Activated B cell treated with CpG ODN at 0.5 μM for 24 hours (primary cell): ENCODE measurements at regions of chr7 and their contacts with region 1.

Region 1: DNA sequence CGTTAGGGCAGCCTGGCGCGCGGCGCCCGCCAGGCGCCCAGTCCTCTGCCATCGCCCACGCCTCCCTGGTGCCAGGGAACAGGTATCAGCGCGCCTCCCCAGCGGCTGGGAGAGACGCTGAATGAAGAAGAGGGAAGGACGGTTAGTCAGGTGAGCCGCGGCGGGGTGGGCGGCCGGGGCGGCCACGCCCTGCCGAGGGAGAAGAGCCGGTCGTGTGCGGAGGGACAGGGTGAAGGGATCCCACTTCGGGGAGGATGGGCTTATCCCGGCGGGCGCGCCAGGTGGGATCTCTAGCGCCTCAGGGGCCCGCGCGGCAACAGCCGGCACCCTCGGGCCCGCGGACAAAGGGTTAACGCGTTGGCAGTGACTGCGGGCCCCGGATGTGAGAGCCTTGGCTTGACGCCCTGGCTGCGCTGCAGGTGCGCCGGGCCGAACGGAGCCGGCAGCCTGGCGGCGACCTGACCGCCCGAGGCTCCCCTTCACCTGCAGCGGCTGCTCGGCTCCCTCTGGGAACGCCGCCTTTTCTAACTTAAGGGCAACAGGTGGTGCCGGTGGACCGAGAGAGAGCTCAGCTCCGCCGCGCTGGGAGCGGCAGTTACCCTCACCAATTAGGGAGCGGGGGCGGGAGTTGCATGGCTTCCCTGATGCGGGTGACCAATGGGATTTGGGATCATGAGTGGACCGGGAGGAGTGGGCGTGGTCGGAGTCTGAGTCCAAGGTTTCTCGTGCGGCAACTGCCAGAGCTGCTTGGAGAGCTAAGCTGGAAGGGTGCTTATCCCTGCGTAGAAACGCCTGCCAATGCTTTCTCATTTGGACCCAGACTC is at the start of gene ARL4A:
- DNase-seq: peak; percentile 76
- ATAC-seq: peak; percentile 63
- H3K4me3 Mint-ChIP-seq: peak within 1 kb of the TSS; percentile 95
- H3K27ac Mint-ChIP-seq: peak within 1 kb of the TSS; percentile 96
- H3K4me1 Mint-ChIP-seq: peaks cover 47% of the 10 kb centered on the region
- H3K27me3 Mint-ChIP-seq: no peaks in the 10 kb centered on the region
- CTCF ChIP-seq: no peak
- total RNA-seq, gene ARL4A: 11.9 TPM in 2 replicates

Region 2: DNA sequence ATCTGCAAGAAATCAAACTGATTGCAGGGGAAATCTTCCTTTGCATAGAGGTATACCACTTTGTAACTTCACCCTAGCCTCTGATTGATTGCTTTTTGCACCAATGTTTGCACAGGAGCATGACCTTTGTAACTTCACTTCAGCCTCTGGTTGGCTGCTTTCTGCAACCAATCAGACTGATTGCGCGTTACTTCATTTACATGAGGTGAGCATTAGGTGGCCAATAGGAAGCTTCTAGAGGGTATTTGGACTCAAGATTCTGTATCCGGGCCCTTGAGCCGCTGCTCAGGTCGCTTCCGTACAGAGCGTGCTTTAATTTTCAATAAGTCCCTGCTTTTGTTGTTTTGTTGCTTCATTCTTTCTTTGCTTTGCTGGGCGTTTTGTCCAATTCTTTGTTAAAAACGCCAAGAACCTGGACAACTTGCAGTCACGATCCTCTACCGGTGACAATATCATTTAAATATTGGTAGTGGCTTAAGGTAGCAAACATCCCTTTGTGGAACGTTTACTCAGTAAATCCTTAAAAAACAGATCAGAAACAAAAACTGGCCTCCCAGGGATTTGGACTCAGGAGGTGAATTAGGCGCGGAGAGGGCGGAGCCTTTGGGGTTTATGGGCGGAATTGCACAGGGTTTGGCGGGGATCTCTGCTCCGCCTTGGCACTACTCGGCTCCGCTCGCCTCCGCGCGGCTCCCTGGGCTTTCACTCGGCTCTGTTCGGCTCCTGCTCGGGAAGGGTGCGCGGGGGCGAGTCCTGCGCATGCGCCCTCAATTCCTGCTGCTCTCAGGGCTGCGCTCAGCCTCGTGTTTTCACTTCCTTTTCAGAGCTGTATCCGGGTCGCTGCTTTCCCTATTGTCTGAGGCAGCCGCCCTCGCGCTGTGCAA is 1713.8 kb before region 1 on chr7 and contains the start of gene PHF14:
- CTCF ChIA-PET with region 1: no interaction called
- POLR2A ChIA-PET with region 1: no interaction called
- intact Hi-C with region 1: loop called (anchors 1 kb)
- DNase-seq: peak; percentile 87
- ATAC-seq: peak; percentile 95
- H3K4me3 Mint-ChIP-seq: peak within 1 kb of the TSS; percentile 93
- H3K27ac Mint-ChIP-seq: peak within 1 kb of the TSS; percentile 95
- H3K4me1 Mint-ChIP-seq: peaks cover 45% of the 10 kb centered on the region
- H3K27me3 Mint-ChIP-seq: peaks cover 3% of the 10 kb centered on the region
- CTCF ChIP-seq: no peak
- total RNA-seq, gene PHF14: 33.0 and 38.2 TPM in 2 replicates

Region 3: GRCh38 chr7:12257582-12257981 is 429.5 kb before region 1 on chr7:
- CTCF ChIA-PET with region 1: no interaction called
- POLR2A ChIA-PET with region 1: no interaction called
- intact Hi-C with region 1: loop called (anchors 2 kb)
- DNase-seq: no peak
- ATAC-seq: peak; percentile 96
- H3K4me3 Mint-ChIP-seq: no peak overlapping the region
- H3K27ac Mint-ChIP-seq: no peak overlapping the region
- H3K4me1 Mint-ChIP-seq: no peaks in the 10 kb centered on the region
- H3K27me3 Mint-ChIP-seq: no peaks in the 10 kb centered on the region
- CTCF ChIP-seq: no peak

Region 4: GRCh38 chr7:12647364-12648219 is 39.5 kb before region 1 on chr7:
- CTCF ChIA-PET with region 1: no interaction called
- POLR2A ChIA-PET with region 1: no interaction called
- intact Hi-C with region 1: no loop called
- DNase-seq: no peak
- ATAC-seq: no peak
- H3K4me3 Mint-ChIP-seq: no peak overlapping the region
- H3K27ac Mint-ChIP-seq: no peak overlapping the region
- H3K4me1 Mint-ChIP-seq: no peaks in the 10 kb centered on the region
- H3K27me3 Mint-ChIP-seq: peaks cover 2% of the 10 kb centered on the region
- CTCF ChIP-seq: no peak

Region 5: GRCh38 chr7:13057462-13058200 is 370.5 kb after region 1 on chr7:
- CTCF ChIA-PET with region 1: interaction called, 4 read pairs
- POLR2A ChIA-PET with region 1: no interaction called
- intact Hi-C with region 1: loop called (anchors 1 kb)
- DNase-seq: no peak
- ATAC-seq: peak; percentile 84
- H3K4me3 Mint-ChIP-seq: peak overlapping the region; percentile 82
- H3K27ac Mint-ChIP-seq: peak overlapping the region; percentile 94
- H3K4me1 Mint-ChIP-seq: peaks cover 44% of the 10 kb centered on the region
- H3K27me3 Mint-ChIP-seq: no peaks in the 10 kb centered on the region
- CTCF ChIP-seq: no peak

Region 6: GRCh38 chr7:13262929-13263530 is 575.9 kb after region 1 on chr7:
- CTCF ChIA-PET with region 1: interaction called, 4 read pairs
- POLR2A ChIA-PET with region 1: no interaction called
- intact Hi-C with region 1: loop called (anchors 1 kb)
- DNase-seq: no peak
- ATAC-seq: no peak
- H3K4me3 Mint-ChIP-seq: no peak overlapping the region
- H3K27ac Mint-ChIP-seq: no peak overlapping the region
- H3K4me1 Mint-ChIP-seq: no peaks in the 10 kb centered on the region
- H3K27me3 Mint-ChIP-seq: peaks cover 3% of the 10 kb centered on the region
- CTCF ChIP-seq: peak; percentile 38